Common myeloid progenitor, CD34-positive (primary cell): ENCODE measurements at regions of chr2 and their contacts with region 1.

Region 1: GRCh38 chr2:28958689-28959088 is 22.4 kb upstream of the TOGARAM2 start:
- DNase-seq: peak; percentile 69 to 77 (median 69)
- H3K4me3 ChIP-seq: no peak overlapping the region
- H3K27ac ChIP-seq: no peak overlapping the region
- H3K4me1 ChIP-seq: peaks cover 8 to 29% (median 15%) of the 10 kb centered on the region in 4 experiments
- H3K27me3 ChIP-seq: no peaks in the 10 kb centered on the region

Region 2: DNA sequence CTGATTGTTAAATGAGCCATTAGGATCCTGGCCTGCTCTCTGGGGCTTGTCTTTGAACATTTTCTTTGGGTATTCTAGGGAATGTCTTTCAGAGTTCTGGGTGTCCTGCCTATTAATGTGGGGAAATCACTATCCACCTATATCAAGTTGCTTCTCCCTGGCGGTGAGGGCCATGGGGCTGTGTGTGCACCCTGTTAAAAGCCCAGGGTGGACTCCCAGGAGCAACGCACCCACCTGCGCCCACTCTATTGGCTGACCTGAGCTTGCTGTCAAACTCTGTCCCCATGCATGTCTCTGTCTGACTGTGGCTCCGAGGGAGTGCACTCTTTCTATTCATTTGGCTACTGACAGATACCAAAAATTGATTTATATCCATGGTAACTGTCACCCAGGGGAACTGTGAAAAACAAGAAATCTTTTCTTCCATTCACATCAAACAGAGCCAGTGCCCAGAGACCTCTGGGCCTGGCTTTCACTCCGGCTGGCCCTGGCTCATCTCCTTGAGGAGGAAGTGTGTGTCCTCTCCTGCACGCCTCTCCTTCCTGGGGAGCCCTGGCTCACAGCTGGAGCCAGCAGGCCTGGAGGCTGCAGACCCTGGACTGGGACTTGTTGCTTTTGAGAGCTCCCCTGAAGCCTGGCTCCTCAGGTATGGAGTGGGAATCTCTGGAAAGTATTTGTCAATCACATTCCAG is 11.9 kb after region 1 on chr2:
- CTCF ChIA-PET with region 1: interaction called, 11 read pairs
- POLR2A ChIA-PET with region 1: no interaction called
- DNase-seq: no peak
- H3K4me3 ChIP-seq: no peak overlapping the region
- H3K27ac ChIP-seq: no peak overlapping the region
- H3K4me1 ChIP-seq: no peaks in the 10 kb centered on the region
- H3K27me3 ChIP-seq: no peaks in the 10 kb centered on the region